Ascending aorta (tissue), 2 donors: ENCODE measurements at regions of chr17 and their contacts with region 1.

Region 1: GRCh38 chr17:68512247-68512982 is at the start of gene PRKAR1A:
- DNase-seq: peak; percentile 78 to 96
- H3K4me3 ChIP-seq: peak within 1 kb of the TSS; percentile 88 to 100
- H3K27ac ChIP-seq: peak within 1 kb of the TSS; percentile 96
- H3K4me1 ChIP-seq: peaks cover 0 to 25% of the 10 kb centered on the region in 2 donors
- H3K27me3 ChIP-seq: no peaks in the 10 kb centered on the region
- CTCF ChIP-seq: peak in 1 of 3 experiments; percentile 11
- total RNA-seq, gene PRKAR1A: 233 TPM

Region 2: GRCh38 chr17:67717624-67718329 is 794.6 kb before region 1 on chr17 and contains the start of gene NOL11:
- intact Hi-C with region 1: loop called (anchors 5 kb)
- DNase-seq: peak; percentile 95 to 100
- H3K4me3 ChIP-seq: peak within 1 kb of the TSS; percentile 91 to 97
- H3K27ac ChIP-seq: peak within 1 kb of the TSS; percentile 89 to 92
- H3K4me1 ChIP-seq: peaks cover 5 to 11% of the 10 kb centered on the region in 2 donors
- H3K27me3 ChIP-seq: no peaks in the 10 kb centered on the region
- CTCF ChIP-seq: peak; percentile 85 to 92 (median 87)
- total RNA-seq, gene NOL11: 22.0 TPM

Region 3: DNA sequence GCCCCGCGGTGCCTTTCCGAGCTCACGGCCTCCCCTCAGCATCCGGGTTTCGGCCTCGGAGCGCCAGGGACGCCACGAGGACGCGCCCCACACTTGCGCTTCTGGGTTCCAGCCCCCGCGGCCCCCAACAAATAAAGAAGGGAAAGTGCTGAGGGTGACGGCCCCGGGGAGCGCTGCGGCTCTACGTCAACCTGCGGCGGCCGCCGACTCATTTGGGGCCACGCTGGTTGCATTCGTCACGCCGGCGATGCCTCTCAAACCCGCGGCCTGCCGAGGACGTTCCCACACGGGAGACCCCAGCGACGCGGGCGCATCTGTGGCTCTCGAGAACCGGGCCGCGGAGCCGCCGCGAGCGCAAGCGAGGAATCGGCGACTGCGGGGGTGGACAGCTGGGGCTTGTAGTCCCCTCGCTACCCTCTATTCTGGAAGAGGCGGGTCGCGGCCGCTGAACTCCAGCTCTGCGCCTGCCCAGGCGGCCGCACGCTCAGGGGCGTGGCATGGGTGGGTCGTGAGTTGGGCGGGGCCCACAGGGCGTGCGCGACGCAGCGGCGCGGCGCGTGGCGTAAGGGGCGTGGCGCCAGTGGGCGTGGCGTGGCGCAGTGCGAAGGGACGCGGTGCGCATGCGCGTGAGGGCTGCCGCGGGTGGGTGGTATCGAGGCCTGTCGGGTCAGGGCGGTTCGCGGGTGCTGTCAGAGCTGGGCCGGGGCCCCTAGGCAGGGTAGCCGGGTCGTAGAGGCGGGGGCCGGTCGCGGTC is 264.8 kb before region 1 on chr17 and contains the start of gene AMZ2:
- intact Hi-C with region 1: loop called (anchors 2 kb)
- DNase-seq: peak; percentile 72 to 95
- H3K4me3 ChIP-seq: peak within 1 kb of the TSS; percentile 83 to 90
- H3K27ac ChIP-seq: peak within 1 kb of the TSS; percentile 96 to 97
- H3K4me1 ChIP-seq: peaks cover 0 to 14% of the 10 kb centered on the region in 2 donors
- H3K27me3 ChIP-seq: no peaks in the 10 kb centered on the region
- CTCF ChIP-seq: no peak
- total RNA-seq, gene AMZ2: 41.6 TPM

Region 4: GRCh38 chr17:68377862-68378770 is 134.3 kb before region 1 on chr17:
- intact Hi-C with region 1: loop called (anchors 5 kb)
- DNase-seq: peak; percentile 94 to 97
- H3K4me3 ChIP-seq: peak overlapping the region in 1 of 2 donors; percentile 0
- H3K27ac ChIP-seq: peak overlapping the region; percentile 76 to 77
- H3K4me1 ChIP-seq: peaks cover 12% of the 10 kb centered on the region in 2 donors
- H3K27me3 ChIP-seq: no peaks in the 10 kb centered on the region
- CTCF ChIP-seq: no peak

Region 5: GRCh38 chr17:68468334-68468733 is 44.1 kb before region 1 on chr17:
- intact Hi-C with region 1: loop called (anchors 2 kb)
- DNase-seq: no peak
- H3K4me3 ChIP-seq: no peak overlapping the region
- H3K27ac ChIP-seq: peak overlapping the region; percentile 67 to 83
- H3K4me1 ChIP-seq: no peaks in the 10 kb centered on the region
- H3K27me3 ChIP-seq: no peaks in the 10 kb centered on the region
- CTCF ChIP-seq: no peak

Region 6: GRCh38 chr17:68576811-68577496 is 64.5 kb after region 1 on chr17:
- intact Hi-C with region 1: no loop called
- DNase-seq: no peak
- H3K4me3 ChIP-seq: no peak overlapping the region
- H3K27ac ChIP-seq: no peak overlapping the region
- H3K4me1 ChIP-seq: no peaks in the 10 kb centered on the region
- H3K27me3 ChIP-seq: no peaks in the 10 kb centered on the region
- CTCF ChIP-seq: no peak

Region 7: DNA sequence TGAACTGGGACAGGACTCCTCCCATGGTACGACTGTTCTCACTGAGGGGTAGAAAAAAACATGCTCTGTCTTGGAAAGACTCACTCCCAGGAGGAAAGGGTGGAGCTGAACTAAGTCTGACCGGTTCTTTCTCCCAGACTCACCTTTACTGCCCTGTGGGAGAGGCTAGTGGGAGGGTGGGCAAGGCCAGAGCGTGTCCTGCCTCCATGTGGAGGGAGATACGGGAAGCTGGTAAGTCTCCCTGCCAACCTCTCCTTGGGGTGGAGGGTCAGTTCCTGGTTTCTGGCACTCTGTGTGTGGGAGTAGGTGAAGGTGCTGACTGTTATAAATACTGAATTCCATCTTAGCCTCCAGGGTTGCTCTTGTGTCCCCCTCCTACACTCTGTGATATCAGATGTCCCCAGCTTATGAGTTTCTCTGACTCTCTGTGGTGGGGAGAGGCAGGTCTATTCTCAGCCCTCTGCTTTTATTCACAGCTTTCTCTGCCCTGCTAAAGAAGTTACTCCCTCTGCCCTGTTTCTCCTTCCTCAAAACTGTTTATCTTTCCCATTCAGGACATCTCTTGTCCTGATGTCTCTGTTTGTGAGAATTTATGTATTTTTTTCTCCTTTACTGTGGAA is 115.7 kb after region 1 on chr17:
- intact Hi-C with region 1: no loop called
- DNase-seq: no peak
- H3K4me3 ChIP-seq: no peak overlapping the region
- H3K27ac ChIP-seq: no peak overlapping the region
- H3K4me1 ChIP-seq: no peaks in the 10 kb centered on the region
- H3K27me3 ChIP-seq: no peaks in the 10 kb centered on the region
- CTCF ChIP-seq: no peak

Region 8: DNA sequence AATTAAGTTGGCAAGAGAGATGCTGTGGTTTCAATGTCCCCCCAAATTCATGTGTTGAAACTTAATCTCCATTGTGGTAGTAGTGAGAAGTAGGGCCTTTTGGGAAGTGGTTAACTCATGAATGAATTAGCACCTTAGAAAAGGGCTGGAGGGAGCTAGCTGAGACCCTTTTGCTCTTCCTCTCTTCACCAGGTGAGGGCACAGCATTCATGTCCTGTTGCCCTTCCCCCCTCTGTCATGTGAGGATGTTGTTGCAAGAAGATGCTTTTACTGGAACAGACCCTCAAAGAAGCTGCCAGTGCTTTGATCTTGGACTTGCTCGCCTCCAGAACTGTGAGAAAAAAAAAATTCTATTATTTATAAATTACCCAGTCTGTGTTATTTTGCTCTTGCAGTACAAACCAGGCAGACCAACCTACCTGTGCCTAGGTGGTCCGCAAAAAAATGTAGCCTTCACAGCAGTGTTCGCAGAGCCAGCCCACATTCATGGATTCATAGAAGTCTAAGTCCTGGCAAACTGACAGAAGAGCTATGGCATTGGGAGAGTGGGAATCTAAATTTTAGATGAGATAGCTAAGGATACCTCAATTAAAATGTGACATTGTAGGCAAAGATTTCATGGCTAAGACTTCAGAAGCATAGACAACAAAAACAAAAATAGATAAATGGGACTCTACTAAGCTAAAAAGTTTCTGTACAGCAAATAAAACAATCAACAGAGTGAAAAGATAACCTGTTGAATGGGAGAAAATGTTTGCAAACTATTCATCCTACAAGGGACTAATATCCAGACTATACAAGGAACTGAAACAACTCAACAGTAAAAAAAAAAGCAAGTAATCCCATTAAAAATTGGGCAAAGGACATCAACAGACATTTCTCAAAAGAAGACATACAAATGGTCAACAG is 846.5 kb after region 1 on chr17:
- intact Hi-C with region 1: no loop called
- DNase-seq: no peak
- H3K4me3 ChIP-seq: no peak overlapping the region
- H3K27ac ChIP-seq: no peak overlapping the region
- H3K4me1 ChIP-seq: no peaks in the 10 kb centered on the region
- H3K27me3 ChIP-seq: no peaks in the 10 kb centered on the region
- CTCF ChIP-seq: no peak